ENCODE measurements at regions of chr16 and their contacts with region 1.

Region 1: DNA sequence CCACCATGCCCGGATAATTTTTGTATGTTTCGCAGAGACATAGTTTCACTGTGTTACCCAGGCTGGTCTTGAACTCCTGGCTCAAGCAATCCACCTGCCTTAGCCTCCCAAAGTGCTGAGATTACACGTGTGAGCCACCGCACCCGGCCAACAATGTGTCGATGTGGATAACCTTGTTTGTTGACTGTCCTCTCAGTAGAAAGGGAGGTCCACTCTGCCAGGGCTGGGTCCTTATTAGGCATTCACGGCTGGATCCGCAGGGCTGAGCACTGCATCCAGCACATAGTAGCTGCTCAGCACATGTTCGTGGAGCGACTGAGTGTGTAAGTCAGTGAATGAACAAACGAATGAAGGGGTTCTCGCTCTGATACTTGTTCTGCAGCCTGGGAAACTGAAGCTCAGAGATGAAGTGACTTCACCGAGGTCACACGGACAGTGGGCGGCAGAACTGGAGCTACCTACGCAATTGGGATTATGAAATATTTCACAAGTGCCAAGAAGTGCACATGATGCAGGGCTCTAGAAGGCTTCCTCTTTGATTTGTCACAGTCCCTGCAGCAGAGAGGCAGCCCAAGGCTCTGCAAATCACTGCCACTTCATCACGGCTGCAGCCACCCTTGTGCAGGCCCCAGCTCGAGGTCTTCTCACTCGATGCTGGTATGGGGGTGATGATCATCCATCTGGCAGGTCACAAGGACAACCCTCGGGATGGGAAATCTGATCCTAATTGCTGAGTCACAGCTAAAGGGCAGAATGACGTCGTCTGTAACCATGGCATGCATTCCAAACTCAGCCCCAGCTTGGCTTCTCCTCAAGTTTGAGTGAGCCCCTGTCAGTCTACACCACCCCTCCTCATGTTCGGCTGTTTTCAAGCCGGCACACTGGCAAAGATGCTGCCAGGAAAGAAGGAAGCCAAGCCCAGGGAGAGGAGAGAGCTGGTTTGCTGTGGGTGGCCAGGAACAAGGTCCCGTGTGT is 28.0 kb upstream of the SNN start:
- DNase-seq: peak; percentile 90 to 94
- ATAC-seq: peak; percentile 92 to 99
- H3K4me3 ChIP-seq: no peak overlapping the region
- H3K27ac ChIP-seq: peak overlapping the region; percentile 88 to 96 (median 94)
- H3K4me1 ChIP-seq: peaks cover 19 to 23% of the 10 kb centered on the region in 2 donors
- H3K27me3 ChIP-seq: no peaks in the 10 kb centered on the region
- CTCF ChIP-seq: peak in 1 of 5 experiments; percentile 25
- POLR2A ChIP-seq: peak; percentile 73 to 82

Region 2: DNA sequence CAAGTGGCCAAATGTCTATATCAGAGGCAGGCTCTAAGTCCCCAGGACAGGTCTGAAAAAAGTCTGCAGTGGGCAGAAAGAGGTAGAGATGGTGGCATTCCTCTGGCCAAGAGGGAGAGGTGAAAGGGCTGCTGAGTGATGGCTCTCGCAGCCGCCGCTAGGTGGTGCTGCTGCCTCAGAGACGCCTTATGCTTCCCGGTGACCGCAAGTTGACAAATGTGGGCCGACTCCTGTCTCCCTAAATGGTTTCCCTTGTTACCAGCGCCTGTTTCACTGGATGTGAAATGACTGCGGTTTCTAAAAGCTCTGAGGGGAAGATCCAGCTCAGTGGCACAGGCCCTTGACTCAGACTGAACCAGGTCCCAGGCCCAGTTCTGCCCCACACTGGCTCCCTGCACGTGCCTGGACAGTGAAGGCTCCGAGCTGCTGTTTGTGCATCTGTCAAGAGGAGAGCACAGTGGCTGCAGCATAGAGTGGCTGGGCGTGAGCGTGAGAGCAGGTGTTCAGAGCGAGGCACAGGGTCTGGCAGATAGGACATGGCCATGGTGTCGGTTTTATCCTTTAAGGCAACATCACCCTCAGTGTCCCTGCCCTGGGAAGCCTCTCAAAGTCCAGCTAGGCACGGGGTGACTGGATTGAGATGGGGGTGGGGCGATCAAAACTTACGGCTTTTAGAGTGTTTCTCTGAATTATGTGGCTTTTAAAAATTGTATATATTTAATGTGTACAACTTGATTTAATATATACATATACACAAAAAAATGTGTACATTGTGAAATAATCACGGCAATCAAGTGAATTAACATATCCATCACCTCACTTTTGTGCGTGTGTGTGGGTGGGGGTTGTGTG is 675.9 kb before region 1 on chr16:
- in situ Hi-C with region 1: no loop called
- intact Hi-C with region 1: loop called (anchors 10 kb)
- DNase-seq: peak; percentile 70 to 76
- ATAC-seq: peak; percentile 63 to 90
- H3K4me3 ChIP-seq: no peak overlapping the region
- H3K27ac ChIP-seq: peak overlapping the region; percentile 57 to 75 (median 69)
- H3K4me1 ChIP-seq: peaks cover 15 to 24% of the 10 kb centered on the region in 2 donors
- H3K27me3 ChIP-seq: no peaks in the 10 kb centered on the region
- CTCF ChIP-seq: peak; percentile 90 to 97 (median 94)
- POLR2A ChIP-seq: no peak

Region 3: DNA sequence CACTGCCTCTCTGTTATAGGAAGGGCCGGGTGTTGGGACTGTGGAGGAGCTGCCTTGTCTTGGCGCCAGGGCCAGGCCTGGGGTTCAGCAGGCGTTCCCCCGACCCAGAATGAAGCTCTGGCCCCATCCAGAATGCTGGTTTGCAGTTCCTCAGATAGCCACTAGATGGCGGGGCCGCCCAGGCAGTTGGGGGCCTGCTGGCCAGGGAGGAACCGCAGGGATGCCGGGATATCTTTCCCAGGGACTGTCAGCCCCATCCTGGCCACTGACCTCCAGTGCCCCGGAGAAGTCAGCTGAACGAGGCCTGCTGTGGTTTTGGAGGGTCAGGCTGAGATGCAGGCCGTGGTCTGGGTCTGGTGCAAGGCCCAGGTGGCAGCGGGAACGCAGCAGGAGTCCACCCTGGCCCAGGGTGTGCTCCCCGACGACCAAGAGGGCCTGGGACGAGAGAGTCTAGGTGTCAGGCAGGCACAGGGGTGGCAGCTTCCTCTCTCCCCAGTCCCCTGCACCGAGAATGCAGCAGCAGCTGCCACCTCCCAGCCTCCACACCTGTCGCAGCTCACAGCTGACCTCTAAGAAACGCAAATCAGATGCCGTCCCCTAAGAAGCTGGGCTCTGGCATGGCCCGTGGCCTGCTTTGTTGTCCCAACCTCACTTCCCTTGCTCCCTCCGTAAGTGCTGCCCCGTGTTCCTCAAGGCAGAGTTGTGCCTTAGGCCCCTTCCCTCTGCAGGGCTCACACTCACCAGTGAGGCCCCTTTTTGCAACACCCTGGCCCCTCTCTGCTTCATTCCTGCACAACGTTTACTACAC is 243.8 kb before region 1 on chr16:
- in situ Hi-C with region 1: loop called in 3 of 4 experiments (anchors 5 to 10 kb)
- intact Hi-C with region 1: loop called (anchors 1 kb)
- DNase-seq: peak; percentile 50 to 77
- ATAC-seq: peak; percentile 67 to 74
- H3K4me3 ChIP-seq: no peak overlapping the region
- H3K27ac ChIP-seq: peak overlapping the region in 2 of 4 donors; percentile 10 to 75
- H3K4me1 ChIP-seq: peaks cover 3 to 4% of the 10 kb centered on the region in 2 donors
- H3K27me3 ChIP-seq: no peaks in the 10 kb centered on the region
- CTCF ChIP-seq: peak; percentile 97 to 99 (median 98)
- POLR2A ChIP-seq: no peak

Region 4: GRCh38 chr16:11497851-11498289 is 142.3 kb before region 1 on chr16:
- in situ Hi-C with region 1: no loop called
- intact Hi-C with region 1: loop called (anchors 1 kb)
- DNase-seq: peak in 1 of 2 donors; percentile 59
- ATAC-seq: no peak
- H3K4me3 ChIP-seq: no peak overlapping the region
- H3K27ac ChIP-seq: peak overlapping the region; percentile 84 to 96 (median 92)
- H3K4me1 ChIP-seq: peaks cover 33 to 34% of the 10 kb centered on the region in 2 donors
- H3K27me3 ChIP-seq: no peaks in the 10 kb centered on the region
- CTCF ChIP-seq: no peak
- POLR2A ChIP-seq: no peak

Region 5: GRCh38 chr16:11586856-11587642 is 53.2 kb before region 1 on chr16 and contains the start of gene LITAF:
- in situ Hi-C with region 1: no loop called
- intact Hi-C with region 1: loop called (anchors 2 kb)
- DNase-seq: peak; percentile 25 to 40
- ATAC-seq: peak; percentile 70 to 73
- H3K4me3 ChIP-seq: peak within 1 kb of the TSS; percentile 60 to 88 (median 70)
- H3K27ac ChIP-seq: peak within 1 kb of the TSS; percentile 72 to 88 (median 83)
- H3K4me1 ChIP-seq: peaks cover 0 to 11% of the 10 kb centered on the region in 2 donors
- H3K27me3 ChIP-seq: peaks cover 0 to 5% (median 0%) of the 10 kb centered on the region in 3 donors
- CTCF ChIP-seq: no peak
- POLR2A ChIP-seq: peak in 1 of 2 donors; percentile 37
- total RNA-seq, gene LITAF: 11.2 to 30.1 (median 19.4) TPM

Region 6: GRCh38 chr16:11604783-11605558 is 35.2 kb before region 1 on chr16:
- in situ Hi-C with region 1: no loop called
- intact Hi-C with region 1: no loop called
- DNase-seq: no peak
- ATAC-seq: peak in 1 of 2 donors; percentile 73
- H3K4me3 ChIP-seq: no peak overlapping the region
- H3K27ac ChIP-seq: peak overlapping the region in 3 of 4 donors; percentile 43 to 67 (median 51)
- H3K4me1 ChIP-seq: peaks cover 0 to 7% of the 10 kb centered on the region in 2 donors
- H3K27me3 ChIP-seq: no peaks in the 10 kb centered on the region
- CTCF ChIP-seq: no peak
- POLR2A ChIP-seq: peak in 1 of 2 donors; percentile 27

Region 7: DNA sequence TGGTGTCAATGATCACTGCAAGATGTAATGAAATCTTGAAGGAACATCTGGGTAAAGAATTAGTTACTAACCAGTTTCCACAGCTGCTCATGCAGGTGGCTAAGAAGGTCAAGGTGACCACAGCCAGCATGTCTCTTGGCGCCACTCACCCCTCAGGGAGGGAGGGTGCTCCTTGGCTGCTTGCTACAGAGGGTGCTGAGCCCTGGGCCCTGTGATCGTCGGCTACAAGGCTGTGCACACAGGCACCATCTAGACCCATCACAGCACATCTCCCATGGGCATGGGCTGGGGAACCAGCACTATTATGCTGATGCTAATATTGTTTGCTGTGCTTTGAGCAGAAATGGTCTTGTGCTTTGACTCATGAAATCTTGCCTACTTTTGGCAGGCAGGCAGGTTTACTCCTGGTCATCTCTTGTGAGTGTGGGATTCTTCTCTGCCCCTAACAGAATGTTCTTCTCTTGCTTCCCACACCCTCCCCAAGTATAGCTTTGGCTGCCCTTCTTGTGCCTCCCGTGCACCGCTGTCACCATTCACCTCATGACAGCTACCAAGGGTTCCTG is 66.0 kb after region 1 on chr16:
- in situ Hi-C with region 1: no loop called
- intact Hi-C with region 1: loop called (anchors 1 kb)
- DNase-seq: peak; percentile 90 to 94
- ATAC-seq: peak; percentile 90 to 92
- H3K4me3 ChIP-seq: peak overlapping the region in 1 of 4 donors; percentile 1
- H3K27ac ChIP-seq: peak overlapping the region; percentile 89 to 95 (median 94)
- H3K4me1 ChIP-seq: peaks cover 61 to 64% of the 10 kb centered on the region in 2 donors
- H3K27me3 ChIP-seq: no peaks in the 10 kb centered on the region
- CTCF ChIP-seq: no peak
- POLR2A ChIP-seq: peak; percentile 52 to 75